Gastrocnemius medialis (tissue), 4 donors: ENCODE measurements at regions of chr3 and their contacts with region 1.

Region 1: DNA sequence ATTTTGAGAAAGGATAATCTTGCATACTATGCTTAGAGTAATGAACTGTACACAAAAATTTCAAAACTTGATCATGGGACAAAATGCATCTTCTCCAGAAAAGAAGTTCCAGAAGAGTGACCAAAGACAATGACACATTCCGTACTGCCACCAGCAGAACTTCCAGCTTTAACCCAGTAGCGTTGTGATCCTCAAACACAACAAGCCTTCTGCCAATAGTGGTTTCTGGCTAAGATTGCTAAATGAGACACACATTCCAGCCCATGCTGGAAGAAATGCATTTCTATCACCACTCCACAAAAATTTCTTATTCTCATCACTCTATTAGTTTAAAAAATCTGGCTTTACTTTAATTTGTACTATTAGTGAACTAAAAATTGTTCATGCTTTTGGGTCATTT is 334.9 kb downstream of the TBC1D5 start:
- DNase-seq: no peak
- ATAC-seq: no peak
- H3K4me3 ChIP-seq: no peak overlapping the region
- H3K27ac ChIP-seq: no peak overlapping the region
- H3K4me1 ChIP-seq: peaks cover 0 to 12% of the 10 kb centered on the region in 2 donors
- H3K27me3 ChIP-seq: no peaks in the 10 kb centered on the region
- CTCF ChIP-seq: no peak
- POLR2A ChIP-seq: no peak

Region 2: GRCh38 chr3:16589867-16590624 is 817.5 kb before region 1 on chr3:
- in situ Hi-C with region 1: loop called in 2 of 4 experiments (anchors 10 to 25 kb)
- intact Hi-C with region 1: no loop called
- DNase-seq: no peak
- ATAC-seq: no peak
- H3K4me3 ChIP-seq: no peak overlapping the region
- H3K27ac ChIP-seq: no peak overlapping the region
- H3K4me1 ChIP-seq: no peaks in the 10 kb centered on the region
- H3K27me3 ChIP-seq: no peaks in the 10 kb centered on the region
- CTCF ChIP-seq: no peak
- POLR2A ChIP-seq: no peak

Region 3: GRCh38 chr3:16831846-16832245 is 575.7 kb before region 1 on chr3:
- in situ Hi-C with region 1: no loop called
- intact Hi-C with region 1: no loop called
- DNase-seq: no peak
- ATAC-seq: no peak
- H3K4me3 ChIP-seq: no peak overlapping the region
- H3K27ac ChIP-seq: no peak overlapping the region
- H3K4me1 ChIP-seq: peaks cover 0 to 3% of the 10 kb centered on the region in 2 donors
- H3K27me3 ChIP-seq: no peaks in the 10 kb centered on the region
- CTCF ChIP-seq: no peak
- POLR2A ChIP-seq: no peak

Region 4: DNA sequence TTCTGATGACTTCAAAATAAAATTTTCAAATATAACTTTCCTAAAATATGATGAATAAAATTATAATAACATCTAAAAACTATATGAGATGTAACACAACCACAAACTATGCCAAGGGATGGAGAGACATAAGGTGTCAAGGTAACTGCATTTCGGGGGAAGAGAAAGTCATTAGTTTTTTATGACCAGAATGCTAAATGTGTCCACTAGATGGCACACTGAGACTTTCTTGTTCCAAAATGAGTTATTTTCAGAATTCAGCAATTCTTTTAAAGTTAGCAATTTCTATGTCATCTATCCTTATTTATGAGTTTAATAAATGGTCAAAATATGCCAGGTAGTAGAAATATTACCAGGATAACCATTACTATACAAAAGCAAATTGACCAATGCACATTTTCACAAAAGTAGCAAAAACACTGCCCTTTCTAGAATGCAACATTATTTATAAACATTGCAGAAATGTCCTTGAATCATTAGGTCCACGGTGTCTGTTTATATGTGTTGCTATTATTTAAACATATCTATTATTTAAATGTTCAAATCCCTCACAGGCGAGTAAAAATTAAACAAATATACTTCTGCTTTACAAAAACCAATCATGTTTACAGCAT is 148.6 kb before region 1 on chr3:
- in situ Hi-C with region 1: loop called (anchors 5 to 25 kb)
- intact Hi-C with region 1: loop called (anchors 2 kb)
- DNase-seq: no peak
- ATAC-seq: no peak
- H3K4me3 ChIP-seq: no peak overlapping the region
- H3K27ac ChIP-seq: no peak overlapping the region
- H3K4me1 ChIP-seq: no peaks in the 10 kb centered on the region
- H3K27me3 ChIP-seq: no peaks in the 10 kb centered on the region
- CTCF ChIP-seq: peak; percentile 54 to 73 (median 60)
- POLR2A ChIP-seq: no peak

Region 5: DNA sequence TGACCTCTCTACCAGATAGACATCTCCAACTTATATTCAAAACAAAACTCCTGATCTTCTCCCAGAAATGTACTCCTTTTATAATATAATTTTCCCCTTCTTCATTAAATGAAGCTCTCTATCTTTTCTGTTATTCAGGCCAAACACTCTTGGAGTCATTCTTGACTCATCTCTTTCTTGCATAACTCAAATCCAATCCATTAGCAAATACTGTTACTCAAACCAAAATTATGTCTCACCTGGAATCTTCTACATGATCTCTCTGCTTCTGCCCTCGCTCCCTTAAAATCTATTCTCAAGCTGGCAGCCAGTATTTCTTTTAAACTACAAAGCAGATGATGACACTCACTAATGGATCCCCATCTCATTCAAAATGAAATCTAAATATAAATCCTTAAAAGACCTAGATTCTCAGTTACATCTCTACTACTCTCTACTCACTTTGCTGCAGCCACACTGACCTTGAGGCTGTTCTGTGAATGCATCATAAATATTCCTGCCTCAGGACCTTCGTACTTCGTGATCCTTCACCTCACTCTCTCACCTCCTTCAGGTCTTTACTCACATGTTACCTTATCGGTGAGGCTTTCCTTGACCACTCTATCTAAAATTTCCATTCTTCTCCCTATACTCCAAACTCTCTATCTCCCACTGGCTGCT is 174.0 kb after region 1 on chr3:
- in situ Hi-C with region 1: no loop called
- intact Hi-C with region 1: no loop called
- DNase-seq: no peak
- ATAC-seq: no peak
- H3K4me3 ChIP-seq: no peak overlapping the region
- H3K27ac ChIP-seq: no peak overlapping the region
- H3K4me1 ChIP-seq: no peaks in the 10 kb centered on the region
- H3K27me3 ChIP-seq: no peaks in the 10 kb centered on the region
- CTCF ChIP-seq: no peak
- POLR2A ChIP-seq: no peak

Region 6: GRCh38 chr3:17605032-17605431 is 197.5 kb after region 1 on chr3:
- in situ Hi-C with region 1: no loop called
- intact Hi-C with region 1: no loop called
- DNase-seq: no peak
- ATAC-seq: peak in 1 of 2 donors; percentile 30
- H3K4me3 ChIP-seq: no peak overlapping the region
- H3K27ac ChIP-seq: no peak overlapping the region
- H3K4me1 ChIP-seq: no peaks in the 10 kb centered on the region
- H3K27me3 ChIP-seq: no peaks in the 10 kb centered on the region
- CTCF ChIP-seq: no peak
- POLR2A ChIP-seq: no peak

Region 7: DNA sequence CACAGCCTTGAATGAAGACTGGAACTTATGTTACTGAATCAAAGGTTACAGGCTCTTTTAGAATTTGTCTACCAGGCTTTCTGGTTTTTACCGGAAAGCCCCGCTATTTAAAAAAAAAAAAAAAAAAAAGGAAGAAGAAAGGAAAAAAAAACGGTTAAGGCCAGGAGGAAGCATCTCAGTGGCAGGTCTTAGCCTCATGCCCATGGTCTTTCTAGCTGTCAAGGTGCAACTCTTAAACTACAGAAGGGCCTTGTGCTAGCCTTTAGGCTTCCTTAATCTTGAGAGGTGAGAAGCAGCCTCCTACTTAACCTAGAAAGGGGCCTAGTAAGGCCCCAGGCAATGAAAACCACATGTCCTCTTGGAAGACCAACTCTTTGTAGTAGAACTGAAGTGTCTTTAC is 257.3 kb after region 1 on chr3:
- in situ Hi-C with region 1: no loop called
- intact Hi-C with region 1: no loop called
- DNase-seq: no peak
- ATAC-seq: no peak
- H3K4me3 ChIP-seq: no peak overlapping the region
- H3K27ac ChIP-seq: no peak overlapping the region
- H3K4me1 ChIP-seq: no peaks in the 10 kb centered on the region
- H3K27me3 ChIP-seq: no peaks in the 10 kb centered on the region
- CTCF ChIP-seq: no peak
- POLR2A ChIP-seq: no peak